MCF 10A (cell line): ENCODE measurements at regions of chr7 and their contacts with region 1.

Region 1: GRCh38 chr7:136016649-136017395 is 39.7 kb upstream of the MTPN start:
- DNase-seq: no peak
- H3K4me3 Mint-ChIP-seq: no peak overlapping the region
- H3K27ac Mint-ChIP-seq: no peak overlapping the region
- H3K4me1 Mint-ChIP-seq: no peaks in the 10 kb centered on the region
- H3K27me3 Mint-ChIP-seq: peaks cover 63% of the 10 kb centered on the region
- CTCF ChIP-seq: no peak

Region 2: GRCh38 chr7:135672560-135673359 is 344.1 kb before region 1 on chr7:
- CTCF ChIA-PET with region 1: interaction called, 39 read pairs
- POLR2A ChIA-PET with region 1: interaction called, 3 read pairs
- intact Hi-C with region 1: no loop called
- DNase-seq: peak; percentile 77
- H3K4me3 Mint-ChIP-seq: no peak overlapping the region
- H3K27ac Mint-ChIP-seq: peak overlapping the region; percentile 46
- H3K4me1 Mint-ChIP-seq: peaks cover 37% of the 10 kb centered on the region
- H3K27me3 Mint-ChIP-seq: no peaks in the 10 kb centered on the region
- CTCF ChIP-seq: peak; percentile 67

Region 3: DNA sequence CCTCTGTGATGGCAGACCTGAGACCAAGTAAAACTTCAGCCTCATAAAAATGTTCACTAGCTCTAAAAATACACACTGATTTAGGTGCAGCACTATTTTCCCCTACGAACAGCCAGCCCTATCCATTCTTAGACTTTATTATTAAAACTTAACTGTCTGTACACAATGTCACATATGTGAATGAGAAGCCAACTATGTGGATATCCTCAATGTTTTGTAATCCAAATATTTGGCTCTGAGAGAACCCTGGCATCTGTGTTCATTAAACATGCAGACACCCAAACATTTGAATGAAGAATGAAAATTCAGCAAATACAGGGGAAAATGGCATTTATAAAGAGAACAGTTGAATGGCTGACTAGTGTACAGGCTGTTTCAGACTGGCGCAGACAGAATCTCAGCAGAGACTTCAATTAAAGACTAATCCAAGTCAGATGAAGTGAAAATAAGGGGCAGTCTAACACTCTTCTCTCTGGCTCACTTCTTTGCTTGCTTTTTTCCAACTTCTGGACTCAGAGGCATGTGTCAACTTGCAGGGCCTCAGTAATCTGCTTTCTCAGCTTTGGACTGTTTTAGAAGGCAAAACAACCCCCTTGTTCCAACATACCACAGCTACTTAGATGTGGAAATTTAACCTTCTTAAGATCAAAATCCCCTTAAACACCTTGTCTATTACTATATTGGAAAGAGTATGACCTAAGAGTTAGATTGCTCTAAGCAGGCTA is 220.8 kb before region 1 on chr7:
- CTCF ChIA-PET with region 1: interaction called, 183 read pairs
- POLR2A ChIA-PET with region 1: no interaction called
- intact Hi-C with region 1: no loop called
- DNase-seq: peak; percentile 6
- H3K4me3 Mint-ChIP-seq: no peak overlapping the region
- H3K27ac Mint-ChIP-seq: peak overlapping the region; percentile 31
- H3K4me1 Mint-ChIP-seq: peaks cover 14% of the 10 kb centered on the region
- H3K27me3 Mint-ChIP-seq: no peaks in the 10 kb centered on the region
- CTCF ChIP-seq: no peak

Region 4: DNA sequence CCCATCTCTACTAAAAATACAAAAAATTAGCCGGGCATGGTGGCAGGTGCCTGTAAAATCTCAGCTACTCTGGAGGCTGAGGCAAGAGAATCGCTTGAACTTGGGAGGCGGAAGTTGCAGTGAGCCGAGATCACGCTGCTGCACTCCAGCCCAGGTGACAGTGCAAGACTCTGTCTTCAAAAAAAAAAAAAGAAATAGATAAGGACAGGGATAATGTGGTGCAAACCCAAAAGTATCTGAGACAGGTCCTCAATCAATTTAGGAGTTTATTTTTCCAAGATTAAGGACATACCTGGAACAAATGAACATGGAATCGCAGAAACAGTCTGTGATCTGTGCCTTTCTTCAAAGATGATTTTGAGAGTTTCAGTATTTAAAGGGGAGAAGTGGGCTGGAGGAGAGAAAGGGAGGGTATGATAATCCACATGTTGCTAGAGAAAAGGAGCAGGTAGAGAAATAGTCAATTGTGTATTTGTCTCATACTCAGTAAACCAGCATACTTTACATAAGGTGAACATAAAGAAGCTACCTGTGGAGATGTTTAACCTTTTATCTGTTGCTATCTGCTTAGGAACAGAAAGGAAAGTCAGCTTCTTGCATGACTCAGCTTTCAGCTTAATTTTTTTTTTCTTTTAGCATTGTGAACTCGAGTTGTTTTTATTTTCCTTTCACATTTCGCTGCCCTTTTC is 34.7 kb before region 1 on chr7:
- CTCF ChIA-PET with region 1: no interaction called
- POLR2A ChIA-PET with region 1: no interaction called
- intact Hi-C with region 1: no loop called
- DNase-seq: no peak
- H3K4me3 Mint-ChIP-seq: no peak overlapping the region
- H3K27ac Mint-ChIP-seq: no peak overlapping the region
- H3K4me1 Mint-ChIP-seq: peaks cover 20% of the 10 kb centered on the region
- H3K27me3 Mint-ChIP-seq: no peaks in the 10 kb centered on the region
- CTCF ChIP-seq: no peak

Region 5: DNA sequence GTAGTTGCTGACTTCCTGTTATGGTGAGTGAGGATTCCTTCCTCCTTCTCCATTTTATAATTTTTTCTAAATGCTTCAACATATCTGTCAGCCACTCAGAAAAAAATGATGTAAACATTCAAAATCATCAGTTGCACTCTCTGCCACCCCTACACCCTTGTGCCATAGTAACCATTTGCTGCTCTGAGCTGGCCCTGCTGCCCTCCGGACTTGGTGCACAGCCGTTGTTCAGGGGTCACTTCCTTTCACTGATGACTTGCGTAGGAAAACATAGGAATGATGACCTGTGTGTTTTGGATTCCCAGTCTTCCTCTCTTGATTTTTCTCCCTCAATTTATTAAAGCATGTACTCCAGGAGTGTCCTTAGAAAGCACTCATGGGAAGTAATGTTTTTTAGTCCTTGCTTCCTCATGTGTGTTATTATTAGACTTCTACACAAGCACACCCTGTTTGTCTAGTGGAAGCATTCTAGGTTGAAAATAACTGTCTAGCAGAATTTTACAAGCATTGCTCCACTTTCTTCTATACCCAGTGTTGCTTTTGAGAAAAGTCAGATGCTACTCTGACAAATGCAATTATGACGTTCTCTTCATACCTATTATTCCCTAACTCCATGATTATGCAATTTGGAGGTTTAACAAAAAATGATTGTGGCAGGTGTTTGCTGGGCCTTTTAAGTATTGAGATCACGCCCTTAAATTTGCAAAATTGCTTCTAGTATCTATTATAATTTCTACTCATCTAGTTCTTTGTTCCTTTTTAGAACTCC is 22.9 kb after region 1 on chr7:
- CTCF ChIA-PET with region 1: no interaction called
- POLR2A ChIA-PET with region 1: no interaction called
- intact Hi-C with region 1: no loop called
- DNase-seq: no peak
- H3K4me3 Mint-ChIP-seq: no peak overlapping the region
- H3K27ac Mint-ChIP-seq: no peak overlapping the region
- H3K4me1 Mint-ChIP-seq: no peaks in the 10 kb centered on the region
- H3K27me3 Mint-ChIP-seq: peaks cover 12% of the 10 kb centered on the region
- CTCF ChIP-seq: no peak